ENCODE measurements at regions of chr22 and their contacts with region 1.

Region 1: GRCh38 chr22:31544481-31545480 is 48.4 kb downstream of the SFI1 start:
- DNase-seq: no peak

Region 2: GRCh38 chr22:31556627-31557203 is 11.9 kb after region 1 on chr22:
- CTCF ChIA-PET with region 1: interaction called, 11 read pairs
- POLR2A ChIA-PET with region 1: no interaction called
- DNase-seq: peak; percentile 61

Region 3: GRCh38 chr22:31579835-31580242 is 35.1 kb after region 1 on chr22:
- CTCF ChIA-PET with region 1: no interaction called
- POLR2A ChIA-PET with region 1: no interaction called
- DNase-seq: no peak